CD4-positive, alpha-beta T cell (primary cell): ENCODE measurements at regions of chr1 and their contacts with region 1.

Region 1: GRCh38 chr1:101238681-101239094 is 1.9 kb downstream of the S1PR1 start:
- DNase-seq: peak; percentile 73 to 92 (median 86)
- ATAC-seq: peak; percentile 25
- H3K4me3 ChIP-seq: peak overlapping the region; percentile 87
- H3K4me3 Mint-ChIP-seq: peak overlapping the region; percentile 98
- H3K27ac ChIP-seq: peak overlapping the region; percentile 56 to 97
- H3K27ac Mint-ChIP-seq: peak overlapping the region; percentile 97
- H3K4me1 ChIP-seq: peaks cover 48% of the 10 kb centered on the region
- H3K4me1 Mint-ChIP-seq: peaks cover 71% of the 10 kb centered on the region
- H3K27me3 ChIP-seq: no peaks in the 10 kb centered on the region
- H3K27me3 Mint-ChIP-seq: peaks cover 3% of the 10 kb centered on the region
- CTCF ChIP-seq: peak; percentile 98

Region 2: DNA sequence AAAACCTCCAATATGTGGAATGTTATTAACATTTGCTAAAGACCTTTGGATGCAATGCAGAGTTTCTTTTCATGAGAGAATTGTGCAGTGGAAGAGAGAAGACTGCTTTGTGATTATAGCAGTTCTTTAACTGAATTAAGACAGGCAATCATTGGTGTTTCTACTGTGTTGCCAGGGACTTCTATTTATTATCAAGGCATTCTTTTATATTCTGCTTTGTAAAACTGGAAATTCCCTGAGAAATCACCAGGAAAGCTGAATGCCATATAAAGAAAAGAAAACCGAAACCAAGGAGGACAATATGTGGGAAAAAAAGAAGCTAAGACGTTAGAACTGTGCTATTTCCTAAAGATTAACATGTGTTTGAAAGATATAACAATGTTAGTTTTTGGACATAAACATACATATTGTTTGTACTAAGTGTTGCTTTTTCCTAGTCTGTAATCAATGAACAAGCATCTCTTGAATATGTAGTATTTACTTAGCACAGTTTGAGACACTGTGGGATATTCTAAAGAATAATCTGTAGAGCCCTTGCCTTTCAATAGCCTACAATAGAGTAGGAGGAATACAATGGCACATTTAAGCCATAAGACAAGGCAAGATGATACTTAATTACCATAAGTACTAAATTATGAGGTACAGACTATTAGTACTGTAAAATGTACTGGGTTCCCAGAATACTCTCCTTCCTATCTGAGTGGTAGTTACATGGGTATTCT is 391.2 kb before region 1 on chr1:
- CTCF ChIA-PET with region 1: no interaction called
- POLR2A ChIA-PET with region 1: no interaction called
- intact Hi-C with region 1: no loop called
- DNase-seq: no peak
- ATAC-seq: no peak
- H3K4me3 ChIP-seq: no peak overlapping the region
- H3K4me3 Mint-ChIP-seq: no peak overlapping the region
- H3K27ac ChIP-seq: no peak overlapping the region
- H3K27ac Mint-ChIP-seq: no peak overlapping the region
- H3K4me1 ChIP-seq: no peaks in the 10 kb centered on the region
- H3K4me1 Mint-ChIP-seq: no peaks in the 10 kb centered on the region
- H3K27me3 ChIP-seq: peaks cover 7 to 10% of the 10 kb centered on the region in 2 experiments
- H3K27me3 Mint-ChIP-seq: peaks cover 39% of the 10 kb centered on the region
- CTCF ChIP-seq: no peak

Region 3: DNA sequence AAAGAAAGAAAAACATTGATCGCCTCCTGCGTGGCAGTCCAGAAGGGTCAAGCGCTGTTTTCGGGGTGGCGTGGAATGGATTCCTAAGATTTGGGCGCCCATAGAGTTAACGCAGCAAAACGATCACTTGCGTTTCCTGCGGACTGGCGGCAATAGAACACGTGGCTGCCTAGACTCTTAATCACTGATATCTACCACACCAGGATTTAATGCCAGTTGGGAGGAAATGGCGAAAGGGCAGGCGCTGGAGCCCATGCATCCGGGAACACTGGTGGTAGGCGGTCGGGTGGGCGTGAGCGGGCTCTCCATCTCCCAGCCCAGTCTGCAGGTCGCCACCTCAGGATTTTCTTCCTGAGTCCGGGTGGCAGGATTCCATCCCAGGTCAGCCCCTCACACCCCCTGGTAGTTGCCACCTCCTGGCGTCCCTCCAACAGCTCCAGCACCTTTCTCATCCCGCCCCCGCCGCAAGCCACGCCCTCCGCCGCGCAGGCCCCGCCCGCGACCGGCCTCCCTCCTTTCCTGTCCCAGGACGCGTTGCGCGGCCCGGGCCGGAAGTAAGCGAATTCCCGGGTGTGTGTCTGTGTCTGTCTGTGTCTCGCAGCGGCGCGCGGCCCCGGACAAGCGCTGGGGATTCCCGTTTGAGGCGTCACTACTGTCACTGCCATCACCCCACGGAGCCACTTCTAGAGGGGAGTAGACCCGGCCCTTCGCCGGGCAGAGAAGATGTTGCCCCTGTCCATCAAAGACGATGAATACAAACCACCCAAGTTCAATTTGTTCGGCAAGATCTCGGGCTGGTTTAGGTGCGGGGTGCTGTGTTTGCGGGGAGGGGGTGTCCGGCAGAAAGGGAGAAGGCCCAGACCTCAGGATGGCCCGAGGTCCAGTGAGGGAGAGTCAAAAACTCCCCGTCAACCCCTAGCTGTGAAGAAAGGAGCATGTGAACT is 342.9 kb before region 1 on chr1 and contains the start of gene SLC30A7:
- CTCF ChIA-PET with region 1: interaction called, 10 read pairs
- POLR2A ChIA-PET with region 1: interaction called, 51 read pairs
- intact Hi-C with region 1: loop called in 1 of 2 experiments (anchors 2 kb)
- DNase-seq: peak; percentile 91 to 98 (median 97)
- ATAC-seq: peak; percentile 71
- H3K4me3 ChIP-seq: peak within 1 kb of the TSS; percentile 93
- H3K4me3 Mint-ChIP-seq: peak within 1 kb of the TSS; percentile 98
- H3K27ac ChIP-seq: peak within 1 kb of the TSS; percentile 98 to 100
- H3K27ac Mint-ChIP-seq: peak within 1 kb of the TSS; percentile 99
- H3K4me1 ChIP-seq: peaks cover 10% of the 10 kb centered on the region
- H3K4me1 Mint-ChIP-seq: peaks cover 69% of the 10 kb centered on the region
- H3K27me3 ChIP-seq: no peaks in the 10 kb centered on the region
- H3K27me3 Mint-ChIP-seq: no peaks in the 10 kb centered on the region
- CTCF ChIP-seq: no peak
- total RNA-seq, gene SLC30A7: 21.6 to 21.7 TPM

Region 4: GRCh38 chr1:100950781-100951180 is 287.9 kb before region 1 on chr1:
- CTCF ChIA-PET with region 1: interaction called, 5 read pairs
- POLR2A ChIA-PET with region 1: interaction called, 18 read pairs
- intact Hi-C with region 1: no loop called
- DNase-seq: no peak
- ATAC-seq: no peak
- H3K4me3 ChIP-seq: no peak overlapping the region
- H3K4me3 Mint-ChIP-seq: no peak overlapping the region
- H3K27ac ChIP-seq: no peak overlapping the region
- H3K27ac Mint-ChIP-seq: peak overlapping the region; percentile 96
- H3K4me1 ChIP-seq: peaks cover 27% of the 10 kb centered on the region
- H3K4me1 Mint-ChIP-seq: peaks cover 81% of the 10 kb centered on the region
- H3K27me3 ChIP-seq: no peaks in the 10 kb centered on the region
- H3K27me3 Mint-ChIP-seq: no peaks in the 10 kb centered on the region
- CTCF ChIP-seq: no peak

Region 5: GRCh38 chr1:101112051-101112780 is 126.5 kb before region 1 on chr1:
- CTCF ChIA-PET with region 1: interaction called, 15 read pairs
- POLR2A ChIA-PET with region 1: interaction called, 64 read pairs
- intact Hi-C with region 1: loop called (anchors 1 to 5 kb)
- DNase-seq: peak; percentile 59 to 95 (median 72)
- ATAC-seq: peak; percentile 87
- H3K4me3 ChIP-seq: no peak overlapping the region
- H3K4me3 Mint-ChIP-seq: peak overlapping the region; percentile 73
- H3K27ac ChIP-seq: peak overlapping the region; percentile 58 to 81
- H3K27ac Mint-ChIP-seq: peak overlapping the region; percentile 94
- H3K4me1 ChIP-seq: peaks cover 23% of the 10 kb centered on the region
- H3K4me1 Mint-ChIP-seq: peaks cover 61% of the 10 kb centered on the region
- H3K27me3 ChIP-seq: no peaks in the 10 kb centered on the region
- H3K27me3 Mint-ChIP-seq: no peaks in the 10 kb centered on the region
- CTCF ChIP-seq: no peak

Region 6: DNA sequence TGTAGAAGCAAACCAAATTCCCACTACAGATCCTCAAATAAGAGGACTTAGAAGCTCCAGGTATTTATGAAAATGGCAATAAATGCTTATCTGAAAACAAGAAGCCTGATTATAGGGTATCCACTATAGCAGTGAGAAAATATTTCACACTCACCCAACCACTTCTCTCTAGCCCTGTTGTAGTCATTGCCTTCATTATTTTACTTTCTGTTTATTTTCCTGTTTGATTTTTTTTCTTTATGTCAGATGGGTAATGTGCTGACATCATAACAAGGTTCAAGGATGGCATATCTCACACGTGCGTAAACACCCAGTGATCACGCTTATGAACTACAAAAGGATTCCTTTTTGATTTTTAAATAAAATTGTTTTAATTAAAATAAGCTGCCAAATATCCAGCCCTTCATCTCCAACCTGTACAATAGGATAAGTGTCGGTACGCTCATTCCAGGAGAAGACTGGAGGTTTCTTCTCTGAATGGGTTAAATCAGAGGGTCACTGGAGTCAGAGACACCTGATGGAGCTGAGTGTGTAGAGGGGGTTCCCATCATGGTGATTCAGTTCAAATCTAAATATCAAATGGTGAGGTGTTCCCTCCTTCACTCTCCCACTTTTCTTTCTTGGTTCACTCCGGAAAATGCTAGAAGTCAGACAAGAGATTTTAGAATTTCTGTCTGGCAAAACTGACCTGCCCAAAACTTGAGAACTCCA is 10.1 kb before region 1 on chr1:
- CTCF ChIA-PET with region 1: interaction called, 14 read pairs
- POLR2A ChIA-PET with region 1: interaction called, 5 read pairs
- intact Hi-C with region 1: no loop called
- DNase-seq: peak in 1 of 14 experiments; percentile 15
- ATAC-seq: peak; percentile 44
- H3K4me3 ChIP-seq: no peak overlapping the region
- H3K4me3 Mint-ChIP-seq: no peak overlapping the region
- H3K27ac ChIP-seq: no peak overlapping the region
- H3K27ac Mint-ChIP-seq: peak overlapping the region; percentile 61
- H3K4me1 ChIP-seq: peaks cover 7% of the 10 kb centered on the region
- H3K4me1 Mint-ChIP-seq: peaks cover 53% of the 10 kb centered on the region
- H3K27me3 ChIP-seq: no peaks in the 10 kb centered on the region
- H3K27me3 Mint-ChIP-seq: no peaks in the 10 kb centered on the region
- CTCF ChIP-seq: no peak

Region 7: DNA sequence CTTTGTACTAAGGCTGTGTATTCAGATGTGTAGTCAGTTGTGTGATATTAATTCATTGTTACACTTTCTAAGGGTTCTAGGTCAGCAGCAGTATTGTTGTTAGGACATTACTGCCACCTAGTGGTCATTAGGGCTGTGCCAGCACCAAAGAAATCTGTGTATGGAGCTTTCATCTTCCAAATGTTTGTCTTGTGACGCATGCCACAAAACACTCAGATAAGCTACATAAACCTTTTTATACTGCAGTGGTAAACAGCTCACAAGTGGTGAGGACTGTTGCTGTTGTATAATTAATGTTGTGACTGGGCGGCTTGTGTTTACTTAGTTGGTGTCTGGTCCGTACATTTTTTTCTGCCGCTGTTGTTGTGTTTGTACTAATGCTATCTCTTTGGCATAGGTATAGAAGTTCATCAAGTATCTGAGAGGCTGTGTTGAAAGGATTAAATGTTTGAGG is 49.8 kb after region 1 on chr1:
- CTCF ChIA-PET with region 1: interaction called, 70 read pairs
- POLR2A ChIA-PET with region 1: interaction called, 113 read pairs
- intact Hi-C with region 1: loop called (anchors 1 kb)
- DNase-seq: peak; percentile 45 to 90 (median 64)
- ATAC-seq: peak; percentile 62
- H3K4me3 ChIP-seq: no peak overlapping the region
- H3K4me3 Mint-ChIP-seq: peak overlapping the region; percentile 25
- H3K27ac ChIP-seq: no peak overlapping the region
- H3K27ac Mint-ChIP-seq: peak overlapping the region; percentile 83
- H3K4me1 ChIP-seq: peaks cover 78% of the 10 kb centered on the region
- H3K4me1 Mint-ChIP-seq: peaks cover 76% of the 10 kb centered on the region
- H3K27me3 ChIP-seq: no peaks in the 10 kb centered on the region
- H3K27me3 Mint-ChIP-seq: no peaks in the 10 kb centered on the region
- CTCF ChIP-seq: peak; percentile 89

Region 8: DNA sequence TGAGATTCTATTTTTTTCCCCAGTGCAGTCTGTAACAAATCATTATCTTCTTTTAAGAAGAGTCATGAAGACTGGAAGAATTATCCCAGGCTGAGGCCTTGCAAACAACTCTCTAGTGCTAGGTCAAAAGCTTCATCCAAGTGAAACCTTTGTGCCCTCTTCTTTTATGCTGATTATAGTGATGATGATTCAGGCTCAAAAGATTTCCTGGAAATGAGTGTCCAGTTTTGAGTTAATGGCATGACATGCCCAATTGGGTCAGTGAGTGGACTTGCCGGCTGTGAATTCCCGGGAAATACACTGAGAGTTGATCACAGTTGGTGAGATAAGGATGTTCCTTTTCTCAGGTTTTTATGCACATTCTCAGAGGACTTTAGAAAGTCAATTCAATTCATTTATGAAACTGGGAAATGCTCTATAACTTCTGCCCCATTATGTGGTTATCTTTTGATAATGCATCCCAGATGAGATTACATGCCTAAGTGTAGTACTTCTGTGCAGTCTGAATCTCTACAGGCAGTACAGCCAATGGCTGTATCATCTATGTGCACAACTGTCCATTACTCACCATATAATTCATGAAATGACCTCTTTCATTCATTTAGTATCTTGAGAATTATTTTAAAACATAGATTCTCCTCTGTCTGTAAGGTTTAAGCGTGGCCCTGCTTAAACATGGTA is 64.3 kb after region 1 on chr1:
- CTCF ChIA-PET with region 1: no interaction called
- POLR2A ChIA-PET with region 1: no interaction called
- intact Hi-C with region 1: no loop called
- DNase-seq: no peak
- ATAC-seq: no peak
- H3K4me3 ChIP-seq: no peak overlapping the region
- H3K4me3 Mint-ChIP-seq: no peak overlapping the region
- H3K27ac ChIP-seq: no peak overlapping the region
- H3K27ac Mint-ChIP-seq: no peak overlapping the region
- H3K4me1 ChIP-seq: peaks cover 12% of the 10 kb centered on the region
- H3K4me1 Mint-ChIP-seq: peaks cover 25% of the 10 kb centered on the region
- H3K27me3 ChIP-seq: no peaks in the 10 kb centered on the region
- H3K27me3 Mint-ChIP-seq: no peaks in the 10 kb centered on the region
- CTCF ChIP-seq: no peak

Region 9: GRCh38 chr1:101905283-101905835 is 666.7 kb after region 1 on chr1:
- CTCF ChIA-PET with region 1: no interaction called
- POLR2A ChIA-PET with region 1: no interaction called
- intact Hi-C with region 1: no loop called
- DNase-seq: no peak
- ATAC-seq: no peak
- H3K4me3 ChIP-seq: no peak overlapping the region
- H3K4me3 Mint-ChIP-seq: no peak overlapping the region
- H3K27ac ChIP-seq: no peak overlapping the region
- H3K27ac Mint-ChIP-seq: no peak overlapping the region
- H3K4me1 ChIP-seq: no peaks in the 10 kb centered on the region
- H3K4me1 Mint-ChIP-seq: no peaks in the 10 kb centered on the region
- H3K27me3 ChIP-seq: no peaks in the 10 kb centered on the region
- H3K27me3 Mint-ChIP-seq: no peaks in the 10 kb centered on the region
- CTCF ChIP-seq: no peak

Region 10: GRCh38 chr1:102120910-102121309 is 882.2 kb after region 1 on chr1:
- CTCF ChIA-PET with region 1: no interaction called
- POLR2A ChIA-PET with region 1: no interaction called
- intact Hi-C with region 1: no loop called
- DNase-seq: no peak
- ATAC-seq: no peak
- H3K4me3 ChIP-seq: no peak overlapping the region
- H3K4me3 Mint-ChIP-seq: no peak overlapping the region
- H3K27ac ChIP-seq: no peak overlapping the region
- H3K27ac Mint-ChIP-seq: no peak overlapping the region
- H3K4me1 ChIP-seq: no peaks in the 10 kb centered on the region
- H3K4me1 Mint-ChIP-seq: no peaks in the 10 kb centered on the region
- H3K27me3 ChIP-seq: no peaks in the 10 kb centered on the region
- H3K27me3 Mint-ChIP-seq: no peaks in the 10 kb centered on the region
- CTCF ChIP-seq: no peak